HEK293 (cell line): ENCODE measurements at regions of chr22 and their contacts with region 1.

Region 1: DNA sequence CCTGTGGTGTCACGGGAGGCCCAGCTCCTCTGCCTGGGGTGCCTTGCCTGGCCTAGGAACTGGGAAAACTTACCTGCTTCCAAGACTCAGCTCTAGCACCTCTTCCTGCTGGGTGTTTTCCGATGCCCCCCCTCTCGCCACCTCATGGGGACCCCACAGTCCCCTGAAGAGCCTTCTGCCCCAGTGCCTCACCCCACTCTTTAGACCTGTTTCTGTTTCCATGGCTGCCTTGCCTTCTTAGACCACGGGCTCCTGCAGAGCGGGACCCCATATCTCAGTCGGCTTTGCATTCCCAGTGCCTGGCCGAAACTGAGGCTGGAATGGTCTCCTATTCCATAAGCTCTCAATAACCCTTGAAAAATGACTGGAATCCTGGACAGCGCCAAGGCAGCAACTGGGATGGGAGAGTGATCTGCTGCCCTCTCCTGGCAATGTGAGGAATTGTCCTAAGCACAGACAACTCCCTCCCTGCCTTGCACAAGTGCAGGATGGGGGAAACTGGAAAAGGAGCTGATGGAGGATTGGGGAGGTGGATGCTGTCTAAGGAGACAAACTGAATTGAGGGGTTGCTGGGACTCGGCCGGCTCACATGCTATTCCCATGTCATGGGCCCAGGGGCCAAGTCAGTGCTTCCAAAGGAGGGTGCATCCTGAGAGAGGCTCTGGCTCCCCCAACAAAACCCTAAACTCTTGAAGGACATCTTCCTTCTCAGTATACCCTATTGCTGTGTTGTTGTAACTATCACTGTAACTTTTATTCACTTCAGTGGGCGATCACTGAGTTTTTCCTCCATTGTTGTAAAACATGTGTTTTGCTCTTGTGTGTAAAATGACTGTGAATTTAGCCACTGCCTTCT is 26.6 kb upstream of the IL17RA start:
- H3K4me3 ChIP-seq: no peak overlapping the region
- H3K27ac ChIP-seq: no peak overlapping the region
- H3K4me1 ChIP-seq: no peaks in the 10 kb centered on the region
- CTCF ChIP-seq: peak; percentile 83

Region 2: DNA sequence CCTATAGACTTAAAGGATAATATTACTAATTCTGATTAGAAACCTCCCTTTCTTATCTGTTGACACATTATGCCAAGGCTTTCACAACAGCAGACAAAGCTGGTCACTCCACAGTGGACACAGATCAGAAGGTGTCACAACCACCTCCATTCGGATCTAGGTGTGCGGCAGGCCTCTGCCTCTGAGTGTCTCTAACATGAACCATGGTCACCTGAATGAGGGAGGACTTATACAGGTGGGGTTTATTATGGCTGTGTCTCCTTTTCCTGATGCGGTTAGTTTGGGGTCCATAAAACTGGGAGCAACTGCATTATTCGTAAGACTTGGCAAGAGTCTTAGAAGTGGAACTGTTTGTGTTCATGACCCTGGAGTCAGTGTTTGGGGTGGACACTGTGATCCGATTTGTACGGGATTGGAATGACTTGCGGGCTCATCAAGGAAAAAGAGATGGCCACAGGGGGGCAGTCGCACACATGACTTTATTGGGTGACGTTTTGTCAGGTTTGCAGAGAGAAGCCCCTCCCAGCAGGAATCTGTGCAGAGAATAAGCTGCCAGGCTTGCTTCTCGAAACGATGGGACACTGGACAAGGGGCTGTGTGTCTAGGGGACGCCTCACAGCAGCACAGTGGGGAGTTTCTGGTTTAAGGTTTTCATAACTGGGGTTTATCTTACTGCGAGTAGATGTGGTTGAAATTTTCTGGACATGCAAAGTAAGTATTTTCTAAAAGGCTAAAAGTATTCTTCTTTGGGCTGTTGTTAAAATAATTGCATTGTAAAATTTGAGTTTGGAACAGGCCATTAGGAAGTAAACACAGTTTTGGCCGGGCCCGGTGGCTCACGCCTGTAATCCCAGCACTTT is 140.8 kb before region 1 on chr22:
- CTCF ChIA-PET with region 1: interaction called, 106 read pairs
- POLR2A ChIA-PET with region 1: no interaction called
- H3K4me3 ChIP-seq: no peak overlapping the region
- H3K27ac ChIP-seq: no peak overlapping the region
- H3K4me1 ChIP-seq: no peaks in the 10 kb centered on the region
- CTCF ChIP-seq: 0 out of 2 replicates have a peak, but pooled peaks have one; percentile 40

Region 3: GRCh38 chr22:16932577-16932976 is 125.6 kb before region 1 on chr22:
- CTCF ChIA-PET with region 1: interaction called, 15 read pairs
- POLR2A ChIA-PET with region 1: no interaction called
- H3K4me3 ChIP-seq: no peak overlapping the region
- H3K27ac ChIP-seq: no peak overlapping the region
- H3K4me1 ChIP-seq: no peaks in the 10 kb centered on the region
- CTCF ChIP-seq: no peak

Region 4: GRCh38 chr22:17009640-17010291 is 48.4 kb before region 1 on chr22:
- CTCF ChIA-PET with region 1: interaction called, 10 read pairs
- POLR2A ChIA-PET with region 1: no interaction called
- H3K4me3 ChIP-seq: no peak overlapping the region
- H3K27ac ChIP-seq: no peak overlapping the region
- H3K4me1 ChIP-seq: no peaks in the 10 kb centered on the region
- CTCF ChIP-seq: no peak

Region 5: GRCh38 chr22:17047656-17048055 is 10.5 kb before region 1 on chr22:
- CTCF ChIA-PET with region 1: interaction called, 17 read pairs
- POLR2A ChIA-PET with region 1: no interaction called
- H3K4me3 ChIP-seq: no peak overlapping the region
- H3K27ac ChIP-seq: no peak overlapping the region
- H3K4me1 ChIP-seq: no peaks in the 10 kb centered on the region
- CTCF ChIP-seq: no peak

Region 6: GRCh38 chr22:17199003-17199731 is 141.0 kb after region 1 on chr22:
- CTCF ChIA-PET with region 1: no interaction called
- POLR2A ChIA-PET with region 1: no interaction called
- H3K4me3 ChIP-seq: no peak overlapping the region
- H3K27ac ChIP-seq: no peak overlapping the region
- H3K4me1 ChIP-seq: no peaks in the 10 kb centered on the region
- CTCF ChIP-seq: no peak

Region 7: DNA sequence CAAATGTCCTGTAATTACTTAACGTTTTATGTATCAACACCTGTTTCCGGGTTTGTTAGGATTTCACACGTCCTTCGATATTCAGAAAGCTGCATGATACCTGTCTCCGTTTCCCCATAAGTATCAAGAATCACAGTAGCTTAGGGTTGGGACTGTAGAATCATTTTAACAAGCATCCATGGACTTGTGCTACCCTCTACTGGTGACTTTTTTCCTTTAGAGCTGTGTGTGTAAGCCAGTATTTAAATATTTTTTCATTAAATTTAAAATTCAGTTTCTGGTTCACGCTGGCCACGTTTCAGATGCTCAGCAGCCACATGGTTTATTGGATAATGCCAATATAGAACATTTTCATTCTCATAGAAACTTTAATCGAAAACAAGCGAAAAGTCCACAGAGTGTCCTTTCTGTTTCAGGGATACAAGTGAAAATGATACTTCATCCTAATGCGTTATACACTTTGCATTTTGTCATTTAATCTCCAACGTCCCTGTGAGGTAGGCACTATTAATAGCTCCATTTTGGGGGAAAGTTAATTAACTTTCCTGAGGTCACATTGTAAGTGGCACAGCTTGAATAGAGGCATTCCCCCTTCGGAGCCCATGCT is 443.6 kb after region 1 on chr22:
- CTCF ChIA-PET with region 1: interaction called, 10 read pairs
- POLR2A ChIA-PET with region 1: no interaction called
- H3K4me3 ChIP-seq: no peak overlapping the region
- H3K27ac ChIP-seq: no peak overlapping the region
- H3K4me1 ChIP-seq: no peaks in the 10 kb centered on the region
- CTCF ChIP-seq: peak; percentile 34; the same call in 1 of the 2 replicates